AG04449 (cell line): ENCODE measurements at regions of chr1 and their contacts with region 1.

Region 1: GRCh38 chr1:179002552-179003345 is 22.9 kb upstream of the FAM20B start:
- DNase-seq: no peak
- H3K4me3 ChIP-seq: no peak overlapping the region
- CTCF ChIP-seq: peak; percentile 88

Region 2: GRCh38 chr1:178300352-178300699 is 702.4 kb before region 1 on chr1:
- CTCF ChIA-PET with region 1: interaction called, 17 read pairs
- POLR2A ChIA-PET with region 1: no interaction called
- DNase-seq: no peak
- H3K4me3 ChIP-seq: no peak overlapping the region
- CTCF ChIP-seq: no peak

Region 3: GRCh38 chr1:178542560-178543356 is 460.0 kb before region 1 on chr1:
- CTCF ChIA-PET with region 1: interaction called, 593 read pairs
- POLR2A ChIA-PET with region 1: interaction called, 3 read pairs
- DNase-seq: no peak
- H3K4me3 ChIP-seq: peak overlapping the region; percentile 72
- CTCF ChIP-seq: peak; percentile 93

Region 4: DNA sequence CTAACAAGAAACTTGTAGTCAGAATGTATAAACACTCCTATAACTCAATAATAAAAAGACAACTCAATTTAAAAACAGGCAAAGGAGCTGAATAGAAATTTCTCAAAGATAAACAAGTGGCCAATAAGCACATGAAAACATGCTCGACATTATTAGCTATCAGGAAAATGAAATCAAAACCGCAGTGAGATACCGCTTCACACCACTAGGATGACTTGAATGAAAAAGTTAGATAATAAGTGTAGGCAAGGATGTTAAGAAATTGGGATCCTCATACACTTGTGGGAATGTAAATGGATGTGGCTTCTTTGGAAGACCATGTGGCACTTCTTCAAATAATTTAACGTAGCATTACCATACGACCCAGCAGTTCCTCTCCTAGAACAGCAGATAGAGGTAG is 268.8 kb before region 1 on chr1:
- CTCF ChIA-PET with region 1: interaction called, 12 read pairs
- POLR2A ChIA-PET with region 1: no interaction called
- DNase-seq: no peak
- H3K4me3 ChIP-seq: no peak overlapping the region
- CTCF ChIP-seq: no peak

Region 5: GRCh38 chr1:178818416-178818815 is 184.3 kb before region 1 on chr1:
- CTCF ChIA-PET with region 1: interaction called, 13 read pairs
- POLR2A ChIA-PET with region 1: no interaction called
- DNase-seq: peak; percentile 14
- H3K4me3 ChIP-seq: no peak overlapping the region
- CTCF ChIP-seq: no peak

Region 6: DNA sequence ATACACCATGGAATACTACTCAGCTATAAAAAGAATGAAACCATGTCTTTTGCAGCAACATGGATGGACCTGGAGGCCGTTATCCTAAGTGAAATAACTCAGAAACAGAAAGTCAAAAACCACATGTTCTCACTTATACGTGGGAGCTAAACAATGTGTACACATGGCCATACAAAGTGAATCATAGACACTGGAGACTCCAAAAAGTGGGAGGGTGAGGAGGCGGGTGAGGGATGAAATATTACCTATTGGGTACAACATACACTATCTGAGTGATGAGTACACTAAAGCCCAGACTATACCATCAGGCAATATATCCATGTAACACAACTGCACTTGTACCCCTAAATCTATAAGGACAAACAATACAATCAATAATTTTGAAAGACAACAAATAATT is 16.5 kb before region 1 on chr1:
- CTCF ChIA-PET with region 1: interaction called, 11 read pairs
- POLR2A ChIA-PET with region 1: no interaction called
- DNase-seq: no peak
- H3K4me3 ChIP-seq: no peak overlapping the region
- CTCF ChIP-seq: no peak

Region 7: GRCh38 chr1:179025125-179025974 is 22.6 kb after region 1 on chr1 and contains the start of gene FAM20B:
- CTCF ChIA-PET with region 1: interaction called, 36 read pairs
- POLR2A ChIA-PET with region 1: interaction called, 3 read pairs
- DNase-seq: peak; percentile 26
- H3K4me3 ChIP-seq: peak within 1 kb of the TSS; percentile 81
- CTCF ChIP-seq: no peak

Region 8: DNA sequence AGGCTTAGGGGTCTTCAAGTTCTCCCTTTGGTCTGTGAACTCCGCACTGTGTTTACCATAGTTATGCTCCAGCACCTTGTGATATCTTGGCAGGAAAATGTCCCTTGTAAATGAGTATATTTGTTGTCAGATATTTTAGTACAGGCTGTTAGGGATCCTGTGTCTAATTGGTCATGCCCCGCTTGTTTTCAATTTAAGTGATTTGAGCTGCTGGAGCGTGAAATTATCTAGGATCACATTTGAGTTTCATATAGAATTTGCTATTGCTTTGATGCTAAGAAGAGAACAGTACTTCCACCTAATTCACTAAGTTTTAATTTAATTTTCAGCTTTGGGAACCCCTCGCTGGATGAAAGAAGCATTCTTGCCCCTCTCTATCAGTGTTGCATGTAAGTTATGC is 63.7 kb after region 1 on chr1:
- CTCF ChIA-PET with region 1: no interaction called
- POLR2A ChIA-PET with region 1: no interaction called
- DNase-seq: no peak
- H3K4me3 ChIP-seq: no peak overlapping the region
- CTCF ChIP-seq: no peak

Region 9: GRCh38 chr1:179105350-179105749 is 102.6 kb after region 1 on chr1:
- CTCF ChIA-PET with region 1: no interaction called
- POLR2A ChIA-PET with region 1: no interaction called
- DNase-seq: no peak
- H3K4me3 ChIP-seq: no peak overlapping the region
- CTCF ChIP-seq: peak; percentile 32

Region 10: GRCh38 chr1:179190861-179191260 is 188.1 kb after region 1 on chr1:
- CTCF ChIA-PET with region 1: no interaction called
- POLR2A ChIA-PET with region 1: no interaction called
- DNase-seq: no peak
- H3K4me3 ChIP-seq: no peak overlapping the region
- CTCF ChIP-seq: no peak